K562 (cell line): ENCODE measurements at regions of chr16 and their contacts with region 1.

Region 1: GRCh38 chr16:73196670-73197069 is 148.7 kb upstream of the ZFHX3 start:
- DNase-seq: peak; percentile 59 to 64 (median 62)
- ATAC-seq: peak; percentile 91
- H3K4me3 ChIP-seq: no peak overlapping the region
- H3K27ac ChIP-seq: no peak overlapping the region
- H3K4me1 ChIP-seq: no peaks in the 10 kb centered on the region
- H3K27me3 ChIP-seq: peaks cover 0 to 8% of the 10 kb centered on the region in 2 experiments; a peak in 1 of 5 replicates
- CTCF ChIP-seq: peak; percentile 59 to 70 (median 65)
- EP300 ChIP-seq: no peak
- POLR2A ChIP-seq: no peak
- RAD21 ChIP-seq: peak; percentile 46 to 67

Region 2: GRCh38 chr16:72832621-72833248 is 363.9 kb before region 1 on chr16:
- CTCF ChIA-PET with region 1: no interaction called
- POLR2A ChIA-PET with region 1: interaction called, 3 read pairs
- in situ Hi-C with region 1: no loop called
- intact Hi-C with region 1: loop called (anchors 2 kb)
- DNase-seq: peak; percentile 74 to 90 (median 84)
- ATAC-seq: peak; percentile 98
- H3K4me3 ChIP-seq: no peak overlapping the region
- H3K27ac ChIP-seq: no peak overlapping the region
- H3K4me1 ChIP-seq: no peaks in the 10 kb centered on the region
- H3K27me3 ChIP-seq: peaks cover 13 to 19% of the 10 kb centered on the region in 2 experiments
- CTCF ChIP-seq: peak; percentile 87 to 97 (median 91)
- EP300 ChIP-seq: no peak
- POLR2A ChIP-seq: no peak
- RAD21 ChIP-seq: peak; percentile 44 to 75

Region 3: DNA sequence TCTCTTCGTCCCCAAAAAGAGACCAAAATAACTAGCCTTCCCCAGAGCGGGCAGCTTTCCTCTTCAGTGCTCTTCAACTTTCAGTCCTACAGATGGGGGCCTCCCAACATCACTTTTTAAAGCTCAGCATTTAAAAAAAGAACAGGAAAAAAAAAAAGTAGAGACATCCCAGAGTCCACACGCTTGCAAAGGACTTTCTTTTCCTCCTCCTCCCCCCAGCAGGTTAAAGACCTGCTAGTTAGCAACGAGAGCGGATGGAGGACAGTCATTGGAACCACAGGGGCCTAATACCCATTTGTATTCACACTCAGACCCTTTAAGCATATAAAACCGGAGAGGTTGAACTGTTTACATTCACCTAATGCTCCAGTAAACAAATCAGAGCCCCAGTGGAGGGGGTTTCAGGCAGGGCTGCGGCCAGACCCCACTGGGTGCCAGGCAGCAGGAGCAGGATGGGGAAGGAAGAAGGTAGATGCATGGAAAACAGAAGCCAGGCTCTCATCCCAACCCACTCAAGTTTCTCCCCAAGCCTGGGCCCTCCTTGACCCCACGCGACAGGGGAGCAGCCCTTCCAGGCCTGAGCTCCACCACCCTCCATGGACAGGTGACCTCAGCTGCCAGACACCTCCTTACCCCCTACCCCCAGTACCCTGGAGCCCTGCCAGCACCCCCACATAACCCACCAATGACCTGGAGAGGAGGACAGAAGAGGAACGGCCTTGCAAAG is 164.0 kb before region 1 on chr16:
- CTCF ChIA-PET with region 1: interaction called, 3 read pairs
- POLR2A ChIA-PET with region 1: no interaction called
- in situ Hi-C with region 1: no loop called
- intact Hi-C with region 1: loop called (anchors 5 kb)
- DNase-seq: no peak
- ATAC-seq: no peak
- H3K4me3 ChIP-seq: no peak overlapping the region
- H3K27ac ChIP-seq: no peak overlapping the region
- H3K4me1 ChIP-seq: peaks cover 3 to 8% of the 10 kb centered on the region in 2 experiments; a peak in 3 of 5 replicates
- H3K27me3 ChIP-seq: peaks cover 20 to 49% of the 10 kb centered on the region in 2 experiments
- CTCF ChIP-seq: no peak
- EP300 ChIP-seq: no peak
- POLR2A ChIP-seq: no peak
- RAD21 ChIP-seq: no peak